ENCODE measurements at regions of chr1 and their contacts with region 1.

Region 1: DNA sequence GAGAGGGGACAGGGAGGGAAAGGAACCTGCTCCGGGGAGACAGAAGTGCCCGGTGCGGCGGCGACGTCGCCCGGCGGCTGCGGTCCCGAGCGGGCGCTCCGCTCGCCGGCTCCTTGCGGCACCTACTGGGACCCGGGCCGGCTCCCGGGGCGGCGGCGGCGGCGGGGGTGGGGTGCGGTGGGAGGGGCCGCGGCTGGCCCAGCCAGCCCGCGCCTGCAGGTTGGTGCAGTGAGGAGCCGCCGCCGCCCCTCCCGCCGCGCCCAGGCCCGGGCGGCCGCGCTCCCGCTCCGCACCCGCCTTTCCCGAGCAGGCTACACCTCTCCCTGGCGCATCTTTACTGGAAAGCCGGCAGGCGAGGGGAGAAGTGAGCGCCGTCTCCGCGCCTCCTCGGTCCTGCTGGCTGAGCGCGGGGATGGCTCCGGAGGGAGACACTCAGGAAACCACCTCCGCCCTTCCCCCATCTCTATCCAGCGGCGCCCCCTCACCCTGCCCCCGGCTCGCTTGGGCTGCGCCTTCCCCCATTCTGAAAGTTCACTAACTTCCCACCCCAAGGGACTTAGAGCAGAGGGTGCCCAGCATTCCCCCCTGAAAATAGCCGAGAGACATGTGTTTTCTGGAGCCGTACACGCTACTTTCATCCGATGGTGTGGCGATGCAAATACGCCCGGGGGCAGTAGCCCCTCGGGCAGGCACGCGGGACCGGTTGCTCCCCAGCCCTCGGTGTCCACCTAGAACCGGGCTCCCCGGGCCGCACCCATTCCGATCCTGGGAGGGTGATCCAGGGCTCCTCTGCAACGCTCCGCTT is at the start of gene PLD5:
- DNase-seq: peak; percentile 44 to 53
- H3K4me3 ChIP-seq: peak within 1 kb of the TSS; percentile 48
- H3K4me3 Mint-ChIP-seq: peak within 1 kb of the TSS; percentile 77
- H3K27ac Mint-ChIP-seq: no peak within 1 kb of the TSS
- H3K4me1 ChIP-seq: peaks cover 13% of the 10 kb centered on the region; the same call in 1 of the 2 replicates
- H3K4me1 Mint-ChIP-seq: no peaks in the 10 kb centered on the region
- H3K27me3 ChIP-seq: no peaks in the 10 kb centered on the region
- H3K27me3 Mint-ChIP-seq: peaks cover 4% of the 10 kb centered on the region
- CTCF ChIP-seq: no peak
- total RNA-seq, gene PLD5: 1.3 and 1.8 TPM in 2 replicates

Region 2: GRCh38 chr1:242629396-242629795 is 104.6 kb after region 1 on chr1:
- CTCF ChIA-PET with region 1: no interaction called
- POLR2A ChIA-PET with region 1: no interaction called
- intact Hi-C with region 1: loop called (anchors 5 kb)
- DNase-seq: no peak
- H3K4me3 ChIP-seq: no peak overlapping the region
- H3K4me3 Mint-ChIP-seq: no peak overlapping the region
- H3K27ac Mint-ChIP-seq: no peak overlapping the region
- H3K4me1 ChIP-seq: no peaks in the 10 kb centered on the region
- H3K4me1 Mint-ChIP-seq: no peaks in the 10 kb centered on the region
- H3K27me3 ChIP-seq: no peaks in the 10 kb centered on the region
- H3K27me3 Mint-ChIP-seq: no peaks in the 10 kb centered on the region
- CTCF ChIP-seq: no peak

Measured in Caco-2 (cell line).